GM12878 (cell line): ENCODE measurements at regions of chr3 and their contacts with region 1.

Region 1: GRCh38 chr3:171838218-171838761 is 4.9 kb upstream of the TMEM212 start:
- DNase-seq: no peak
- ATAC-seq: peak; percentile 49
- H3K4me3 ChIP-seq: no peak overlapping the region
- H3K27ac ChIP-seq: no peak overlapping the region
- H3K4me1 ChIP-seq: 0 out of 2 replicates have a peak, but pooled peaks cover 3% of the 10 kb centered on the region
- H3K27me3 ChIP-seq: no peaks in the 10 kb centered on the region; a peak in 1 of 4 replicates
- CTCF ChIP-seq: no peak
- EP300 ChIP-seq: peak in 1 of 2 experiments; percentile 65; a peak in 1 of 4 replicates
- POLR2A ChIP-seq: no peak
- RAD21 ChIP-seq: no peak

Region 2: DNA sequence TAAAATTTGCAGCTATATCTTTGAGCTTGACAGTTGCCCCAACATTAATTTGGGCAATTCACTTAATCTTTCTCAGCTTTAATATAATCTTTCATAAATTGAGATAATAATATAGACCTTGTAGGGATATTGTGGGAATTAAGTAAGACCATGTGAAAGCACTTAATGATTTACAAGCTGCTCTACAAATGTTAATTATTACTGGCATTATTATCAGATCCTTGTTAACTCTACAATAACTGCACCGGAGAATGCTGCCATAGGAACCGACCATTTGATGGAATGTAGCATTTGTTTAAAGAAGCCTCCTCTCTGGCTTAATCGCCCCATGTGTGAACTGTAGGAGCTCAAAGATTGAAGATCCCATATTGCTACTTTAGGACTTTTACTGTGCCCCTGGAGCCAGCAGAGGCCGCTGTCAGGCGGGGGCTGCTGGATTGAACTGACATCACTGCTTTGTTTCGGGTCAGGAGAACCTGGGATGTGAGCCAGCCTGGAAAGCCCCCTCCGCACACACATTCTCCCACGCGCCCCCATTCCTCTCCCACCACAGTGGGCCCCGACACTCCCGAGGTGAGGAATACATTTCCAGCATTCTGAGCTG is 223.9 kb before region 1 on chr3:
- CTCF ChIA-PET with region 1: interaction called, 60 read pairs
- POLR2A ChIA-PET with region 1: no interaction called
- RAD21 ChIA-PET with region 1: interaction called, 46 read pairs
- SMC1A ChIA-PET with region 1: interaction called, 39 read pairs
- in situ Hi-C with region 1: no loop called
- intact Hi-C with region 1: loop called (anchors 2 kb)
- DNase-seq: no peak
- ATAC-seq: peak; percentile 83
- H3K4me3 ChIP-seq: no peak overlapping the region
- H3K27ac ChIP-seq: no peak overlapping the region
- H3K4me1 ChIP-seq: no peaks in the 10 kb centered on the region
- H3K27me3 ChIP-seq: no peaks in the 10 kb centered on the region; a peak in 1 of 4 replicates
- CTCF ChIP-seq: peak; percentile 64 to 83 (median 67)
- EP300 ChIP-seq: no peak
- POLR2A ChIP-seq: no peak
- RAD21 ChIP-seq: peak; percentile 63

Region 3: GRCh38 chr3:171646357-171647133 is 191.7 kb before region 1 on chr3:
- CTCF ChIA-PET with region 1: interaction called, 38 read pairs
- POLR2A ChIA-PET with region 1: interaction called, 3 read pairs
- RAD21 ChIA-PET with region 1: interaction called, 19 read pairs
- SMC1A ChIA-PET with region 1: interaction called, 40 read pairs
- in situ Hi-C with region 1: loop called (anchors 5 kb)
- intact Hi-C with region 1: loop called (anchors 1 kb)
- DNase-seq: no peak
- ATAC-seq: peak; percentile 70
- H3K4me3 ChIP-seq: no peak overlapping the region
- H3K27ac ChIP-seq: no peak overlapping the region
- H3K4me1 ChIP-seq: no peaks in the 10 kb centered on the region
- H3K27me3 ChIP-seq: no peaks in the 10 kb centered on the region
- CTCF ChIP-seq: peak; percentile 44 to 67 (median 55)
- EP300 ChIP-seq: no peak
- POLR2A ChIP-seq: no peak
- RAD21 ChIP-seq: peak; percentile 80

Region 4: GRCh38 chr3:172002512-172003078 is 164.3 kb after region 1 on chr3:
- CTCF ChIA-PET with region 1: no interaction called
- POLR2A ChIA-PET with region 1: no interaction called
- RAD21 ChIA-PET with region 1: no interaction called
- SMC1A ChIA-PET with region 1: no interaction called
- in situ Hi-C with region 1: no loop called
- intact Hi-C with region 1: no loop called
- DNase-seq: no peak
- ATAC-seq: no peak
- H3K4me3 ChIP-seq: no peak overlapping the region
- H3K27ac ChIP-seq: no peak overlapping the region
- H3K4me1 ChIP-seq: no peaks in the 10 kb centered on the region
- H3K27me3 ChIP-seq: no peaks in the 10 kb centered on the region
- CTCF ChIP-seq: no peak
- EP300 ChIP-seq: no peak
- POLR2A ChIP-seq: no peak
- RAD21 ChIP-seq: no peak

Region 5: DNA sequence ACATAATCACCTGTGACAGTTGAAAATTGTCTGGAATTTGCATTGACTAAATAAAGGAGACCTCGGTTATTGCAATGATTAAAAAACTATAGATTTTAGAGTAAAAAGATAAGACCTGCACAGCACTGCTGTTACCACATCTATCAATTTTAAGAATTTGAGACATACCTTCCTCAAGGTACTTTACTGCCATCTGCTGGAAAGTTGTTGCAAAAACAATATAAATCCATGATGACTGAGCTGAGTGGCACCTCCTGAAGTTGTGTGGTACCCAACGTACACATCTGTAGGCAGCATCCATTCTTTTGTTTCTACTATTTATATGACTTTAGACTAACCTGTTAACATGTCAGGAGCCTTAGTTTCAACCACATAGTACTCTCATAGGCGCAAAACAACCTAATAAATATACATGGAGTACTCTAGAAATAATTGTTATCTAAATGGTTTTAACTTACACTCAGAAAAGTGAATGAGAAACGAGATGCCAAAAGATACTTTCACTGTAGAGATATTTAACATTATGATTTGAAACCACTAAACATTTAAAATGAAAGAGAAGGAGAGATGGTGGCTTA is 503.3 kb after region 1 on chr3:
- CTCF ChIA-PET with region 1: interaction called, 17 read pairs
- POLR2A ChIA-PET with region 1: no interaction called
- RAD21 ChIA-PET with region 1: interaction called, 23 read pairs
- SMC1A ChIA-PET with region 1: interaction called, 20 read pairs
- in situ Hi-C with region 1: no loop called
- intact Hi-C with region 1: loop called (anchors 1 kb)
- DNase-seq: peak; percentile 24
- ATAC-seq: peak; percentile 92
- H3K4me3 ChIP-seq: no peak overlapping the region
- H3K27ac ChIP-seq: no peak overlapping the region
- H3K4me1 ChIP-seq: no peaks in the 10 kb centered on the region
- H3K27me3 ChIP-seq: no peaks in the 10 kb centered on the region
- CTCF ChIP-seq: peak; percentile 53 to 67 (median 59); a peak in 5 of 6 replicates
- EP300 ChIP-seq: no peak
- POLR2A ChIP-seq: no peak
- RAD21 ChIP-seq: peak; percentile 73

Region 6: DNA sequence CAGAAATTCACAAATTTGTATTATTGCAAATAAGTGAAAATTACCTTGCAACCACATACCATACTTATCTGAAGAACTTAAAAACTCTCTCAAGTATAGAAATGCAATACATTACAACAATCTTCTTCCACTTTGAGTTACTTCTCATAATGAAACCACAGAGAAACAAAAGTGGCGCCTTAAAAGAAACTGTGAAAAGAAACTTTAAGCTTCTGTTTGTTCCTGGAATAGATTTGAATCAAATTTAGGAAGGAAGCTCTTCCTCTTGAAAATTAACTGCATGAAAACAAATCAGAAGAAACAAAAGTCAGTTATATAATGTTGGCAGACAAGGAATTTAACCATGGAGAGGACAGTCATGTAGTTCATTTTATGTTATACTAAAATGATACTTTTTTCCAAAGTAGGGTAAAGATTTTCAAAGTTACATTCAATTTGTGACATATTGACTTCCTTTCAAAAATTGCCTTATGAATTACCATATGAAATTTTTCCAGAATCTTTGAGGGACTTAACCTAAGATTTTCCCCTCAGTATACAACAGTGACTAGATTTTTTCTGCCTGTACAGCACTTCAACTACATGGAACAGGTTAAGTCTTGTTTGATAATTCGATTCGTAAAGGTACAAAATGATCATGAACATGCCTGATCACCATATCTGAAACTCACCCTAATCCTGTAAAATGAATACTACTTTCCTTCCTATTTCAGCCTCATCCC is 742.6 kb after region 1 on chr3:
- CTCF ChIA-PET with region 1: no interaction called
- POLR2A ChIA-PET with region 1: no interaction called
- RAD21 ChIA-PET with region 1: no interaction called
- SMC1A ChIA-PET with region 1: no interaction called
- in situ Hi-C with region 1: no loop called
- intact Hi-C with region 1: no loop called
- DNase-seq: no peak
- ATAC-seq: peak; percentile 88
- H3K4me3 ChIP-seq: no peak overlapping the region
- H3K27ac ChIP-seq: peak overlapping the region; percentile 3; the same call in 1 of the 2 replicates
- H3K4me1 ChIP-seq: peaks cover 27% of the 10 kb centered on the region
- H3K27me3 ChIP-seq: no peaks in the 10 kb centered on the region
- CTCF ChIP-seq: no peak
- EP300 ChIP-seq: peak in 1 of 2 experiments; percentile 26; a peak in 1 of 4 replicates
- POLR2A ChIP-seq: no peak
- RAD21 ChIP-seq: no peak